ENCODE measurements at regions of chr12 and their contacts with region 1.

Region 1: GRCh38 chr12:110280779-110281548 is at the start of gene ATP2A2:
- DNase-seq: peak; percentile 87 to 93 (median 91)
- ATAC-seq: peak; percentile 96
- H3K4me3 ChIP-seq: peak within 1 kb of the TSS; percentile 83
- H3K4me3 Mint-ChIP-seq: peak within 1 kb of the TSS; percentile 87 to 96 (median 93)
- H3K27ac ChIP-seq: peak within 1 kb of the TSS; percentile 92
- H3K27ac Mint-ChIP-seq: peak within 1 kb of the TSS; percentile 84 to 93 (median 89)
- H3K4me1 ChIP-seq: peaks cover 12 to 27% of the 10 kb centered on the region in 2 donors
- H3K4me1 Mint-ChIP-seq: peaks cover 39 to 50% (median 48%) of the 10 kb centered on the region in 7 donors
- H3K27me3 ChIP-seq: no peaks in the 10 kb centered on the region
- H3K27me3 Mint-ChIP-seq: peaks cover 0 to 11% (median 0%) of the 10 kb centered on the region in 5 donors
- total RNA-seq, gene ATP2A2: 81.4 to 160 (median 83.9) TPM

Region 2: GRCh38 chr12:110048242-110049027 is 232.5 kb before region 1 on chr12 and contains the start of gene C12orf76:
- CTCF ChIA-PET with region 1: interaction called, 3 read pairs
- POLR2A ChIA-PET with region 1: no interaction called
- intact Hi-C with region 1: loop called (anchors 1 kb)
- DNase-seq: peak; percentile 67 to 92 (median 90)
- ATAC-seq: peak; percentile 100
- H3K4me3 ChIP-seq: peak within 1 kb of the TSS; percentile 81
- H3K4me3 Mint-ChIP-seq: peak within 1 kb of the TSS; percentile 84 to 97 (median 93)
- H3K27ac ChIP-seq: peak within 1 kb of the TSS; percentile 77
- H3K27ac Mint-ChIP-seq: peak within 1 kb of the TSS; percentile 90 to 99 (median 96)
- H3K4me1 ChIP-seq: peaks cover 19% of the 10 kb centered on the region in 2 donors
- H3K4me1 Mint-ChIP-seq: peaks cover 16 to 46% (median 34%) of the 10 kb centered on the region in 7 donors
- H3K27me3 ChIP-seq: no peaks in the 10 kb centered on the region
- H3K27me3 Mint-ChIP-seq: no peaks in the 10 kb centered on the region
- total RNA-seq, gene C12orf76: 14.6 to 28.7 (median 27.8) TPM

Region 3: DNA sequence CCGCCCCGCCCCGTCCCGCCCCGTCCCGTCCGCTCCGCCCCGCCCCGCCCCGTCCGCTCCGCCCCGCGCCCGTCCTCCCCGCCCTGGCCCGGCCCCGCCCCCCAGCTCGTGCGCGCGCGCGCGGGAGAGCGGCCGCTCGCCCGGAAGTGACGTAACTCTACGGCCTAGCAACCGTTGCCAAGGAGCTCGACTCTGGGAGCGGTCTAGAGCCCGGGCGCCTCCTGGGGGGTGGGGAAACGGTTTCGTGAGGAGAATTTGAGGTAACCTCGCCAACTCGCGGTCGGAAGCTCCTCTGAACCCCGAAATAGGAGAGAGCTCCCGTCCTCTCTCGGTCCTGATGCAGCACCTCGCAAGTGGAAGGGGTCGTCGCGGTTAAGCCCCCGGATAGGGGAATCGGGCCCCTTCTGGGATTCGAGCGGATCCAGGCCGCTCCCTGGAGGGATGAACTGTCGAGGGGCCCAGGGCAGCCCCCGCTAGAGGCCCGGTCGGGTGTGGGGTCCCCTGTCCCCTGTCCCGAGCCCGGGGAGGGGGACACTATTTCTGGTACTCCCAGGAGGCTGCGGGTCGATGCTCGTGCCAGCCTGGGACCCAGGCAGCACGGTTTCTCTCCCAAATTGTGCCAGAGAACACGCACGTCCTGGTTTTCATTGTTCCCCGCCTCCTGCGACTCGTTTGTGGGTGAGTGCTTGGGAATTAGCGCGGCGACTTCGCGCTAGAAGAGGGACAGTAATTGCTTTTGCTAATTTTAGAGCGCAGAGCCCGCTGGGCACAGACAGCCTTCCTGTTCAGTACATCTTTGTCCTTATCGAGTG is 156.6 kb before region 1 on chr12 and contains the start of gene IFT81:
- CTCF ChIA-PET with region 1: no interaction called
- POLR2A ChIA-PET with region 1: interaction called, 7 read pairs
- intact Hi-C with region 1: loop called (anchors 1 kb)
- DNase-seq: peak; percentile 84 to 98 (median 93)
- ATAC-seq: peak; percentile 98
- H3K4me3 ChIP-seq: peak within 1 kb of the TSS; percentile 99
- H3K4me3 Mint-ChIP-seq: peak within 1 kb of the TSS; percentile 83 to 94 (median 92)
- H3K27ac ChIP-seq: peak within 1 kb of the TSS; percentile 84
- H3K27ac Mint-ChIP-seq: peak within 1 kb of the TSS; percentile 56 to 94 (median 90)
- H3K4me1 ChIP-seq: peaks cover 4 to 5% of the 10 kb centered on the region in 2 donors
- H3K4me1 Mint-ChIP-seq: peaks cover 0 to 9% (median 8%) of the 10 kb centered on the region in 7 donors
- H3K27me3 ChIP-seq: no peaks in the 10 kb centered on the region
- H3K27me3 Mint-ChIP-seq: peaks cover 0 to 52% (median 0%) of the 10 kb centered on the region in 5 donors
- total RNA-seq, gene IFT81: 0.66 to 1.3 (median 1.3) TPM

Region 4: GRCh38 chr12:110403146-110403975 is 122.4 kb after region 1 on chr12 and contains the start of gene ANAPC7:
- CTCF ChIA-PET with region 1: no interaction called
- POLR2A ChIA-PET with region 1: no interaction called
- intact Hi-C with region 1: loop called (anchors 1 to 2 kb)
- DNase-seq: peak; percentile 74 to 90 (median 87)
- ATAC-seq: peak; percentile 98
- H3K4me3 ChIP-seq: peak within 1 kb of the TSS; percentile 99
- H3K4me3 Mint-ChIP-seq: peak within 1 kb of the TSS in 9 of 10 donors; percentile 96 to 100 (median 98)
- H3K27ac ChIP-seq: peak within 1 kb of the TSS; percentile 81
- H3K27ac Mint-ChIP-seq: peak within 1 kb of the TSS; percentile 97 to 100 (median 99)
- H3K4me1 ChIP-seq: peaks cover 6 to 15% of the 10 kb centered on the region in 2 donors
- H3K4me1 Mint-ChIP-seq: peaks cover 15 to 50% (median 29%) of the 10 kb centered on the region in 7 donors
- H3K27me3 ChIP-seq: no peaks in the 10 kb centered on the region
- H3K27me3 Mint-ChIP-seq: no peaks in the 10 kb centered on the region
- total RNA-seq, gene ANAPC7: 40.9 to 71.7 (median 59.7) TPM

Region 5: GRCh38 chr12:110583137-110584059 is 302.4 kb after region 1 on chr12 and contains the start of gene PPTC7:
- CTCF ChIA-PET with region 1: no interaction called
- POLR2A ChIA-PET with region 1: no interaction called
- intact Hi-C with region 1: loop called in 1 of 2 experiments (anchors 1 kb)
- DNase-seq: peak; percentile 84 to 97 (median 93)
- ATAC-seq: peak; percentile 98
- H3K4me3 ChIP-seq: peak within 1 kb of the TSS; percentile 72
- H3K4me3 Mint-ChIP-seq: peak within 1 kb of the TSS; percentile 91 to 97 (median 95)
- H3K27ac ChIP-seq: peak within 1 kb of the TSS; percentile 97
- H3K27ac Mint-ChIP-seq: peak within 1 kb of the TSS; percentile 93 to 97 (median 95)
- H3K4me1 ChIP-seq: peaks cover 26 to 55% of the 10 kb centered on the region in 2 donors
- H3K4me1 Mint-ChIP-seq: peaks cover 53 to 74% (median 67%) of the 10 kb centered on the region in 7 donors
- H3K27me3 ChIP-seq: no peaks in the 10 kb centered on the region
- H3K27me3 Mint-ChIP-seq: no peaks in the 10 kb centered on the region
- total RNA-seq, gene PPTC7: 36.7 to 43.8 (median 38.8) TPM

Region 6: GRCh38 chr12:110613771-110614684 is 333.1 kb after region 1 on chr12 and contains the start of gene TCTN1:
- CTCF ChIA-PET with region 1: no interaction called
- POLR2A ChIA-PET with region 1: no interaction called
- intact Hi-C with region 1: loop called (anchors 5 kb)
- DNase-seq: peak; percentile 88 to 98 (median 93)
- ATAC-seq: peak; percentile 100
- H3K4me3 ChIP-seq: peak within 1 kb of the TSS; percentile 75
- H3K4me3 Mint-ChIP-seq: peak within 1 kb of the TSS; percentile 81 to 89 (median 88)
- H3K27ac ChIP-seq: peak within 1 kb of the TSS; percentile 87
- H3K27ac Mint-ChIP-seq: peak within 1 kb of the TSS; percentile 31 to 92 (median 87)
- H3K4me1 ChIP-seq: peaks cover 4 to 6% of the 10 kb centered on the region in 2 donors
- H3K4me1 Mint-ChIP-seq: peaks cover 0 to 10% (median 4%) of the 10 kb centered on the region in 7 donors
- H3K27me3 ChIP-seq: no peaks in the 10 kb centered on the region
- H3K27me3 Mint-ChIP-seq: no peaks in the 10 kb centered on the region
- total RNA-seq, gene TCTN1: 5.2 to 13.0 (median 10.2) TPM

Measured in naive thymus-derived CD4-positive, alpha-beta T cell (primary cell).